ENCODE measurements at regions of chr16 and their contacts with region 1.

Region 1: GRCh38 chr16:17578921-17579874 is 108.4 kb upstream of the XYLT1 start:
- DNase-seq: peak; percentile 80
- H3K4me3 ChIP-seq: no peak overlapping the region
- H3K27ac ChIP-seq: no peak overlapping the region
- H3K27me3 ChIP-seq: no peaks in the 10 kb centered on the region
- CTCF ChIP-seq: peak; percentile 97

Region 2: GRCh38 chr16:16861546-16861945 is 717.7 kb before region 1 on chr16:
- CTCF ChIA-PET with region 1: interaction called, 17 read pairs
- POLR2A ChIA-PET with region 1: no interaction called
- DNase-seq: peak; percentile 0
- H3K4me3 ChIP-seq: no peak overlapping the region
- H3K27ac ChIP-seq: no peak overlapping the region
- H3K27me3 ChIP-seq: no peaks in the 10 kb centered on the region
- CTCF ChIP-seq: peak; percentile 72

Region 3: GRCh38 chr16:17460890-17461289 is 118.3 kb before region 1 on chr16:
- CTCF ChIA-PET with region 1: no interaction called
- POLR2A ChIA-PET with region 1: no interaction called
- DNase-seq: no peak
- H3K4me3 ChIP-seq: no peak overlapping the region
- H3K27ac ChIP-seq: no peak overlapping the region
- H3K27me3 ChIP-seq: no peaks in the 10 kb centered on the region
- CTCF ChIP-seq: no peak

Region 4: DNA sequence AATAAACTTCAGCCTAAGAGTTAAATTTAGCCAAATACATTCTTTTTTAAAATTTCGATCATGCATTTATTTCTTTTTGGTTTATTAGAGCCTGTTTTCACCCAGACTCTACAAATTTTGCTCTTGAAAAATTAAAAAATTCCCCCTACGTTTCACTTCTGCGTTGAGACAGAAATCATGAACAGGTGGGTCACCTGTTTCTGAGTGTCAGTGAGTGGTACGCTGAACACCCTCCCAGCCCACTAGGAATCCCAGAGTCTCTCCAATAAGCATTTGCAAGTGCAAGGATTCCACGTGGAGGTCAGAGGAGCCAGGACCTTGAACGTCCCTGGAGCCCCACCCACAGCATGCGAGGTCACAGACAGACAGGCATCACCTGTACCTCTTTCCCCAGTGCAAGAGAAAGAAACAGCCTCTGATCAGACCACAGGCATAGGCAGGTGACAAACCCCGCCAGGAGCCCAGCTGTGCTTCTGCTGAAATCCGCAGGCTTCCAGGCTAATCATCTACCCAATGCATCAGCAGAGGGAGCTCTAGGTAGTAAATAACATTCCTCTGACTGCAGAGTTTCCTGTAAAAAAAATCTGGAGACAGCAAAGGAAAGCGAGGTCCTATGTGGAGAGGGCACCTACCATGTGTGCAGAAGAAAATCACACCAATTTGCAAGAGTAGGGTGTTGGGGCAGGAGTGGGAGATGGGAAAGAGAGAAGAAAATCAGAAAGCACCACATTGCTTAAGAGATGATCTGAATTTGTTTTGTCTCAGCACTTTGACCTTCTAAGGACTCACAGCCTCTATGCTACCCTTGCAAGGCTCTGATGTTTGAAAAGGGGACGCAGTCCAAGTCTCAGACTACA is 102.6 kb before region 1 on chr16:
- CTCF ChIA-PET with region 1: interaction called, 124 read pairs
- POLR2A ChIA-PET with region 1: interaction called, 4 read pairs
- DNase-seq: peak; percentile 51
- H3K4me3 ChIP-seq: no peak overlapping the region
- H3K27ac ChIP-seq: no peak overlapping the region
- H3K27me3 ChIP-seq: no peaks in the 10 kb centered on the region
- CTCF ChIP-seq: peak; percentile 74

Region 5: GRCh38 chr16:17497648-17498047 is 81.5 kb before region 1 on chr16:
- CTCF ChIA-PET with region 1: interaction called, 13 read pairs
- POLR2A ChIA-PET with region 1: no interaction called
- DNase-seq: no peak
- H3K4me3 ChIP-seq: no peak overlapping the region
- H3K27ac ChIP-seq: no peak overlapping the region
- H3K27me3 ChIP-seq: no peaks in the 10 kb centered on the region
- CTCF ChIP-seq: no peak

Region 6: GRCh38 chr16:17529982-17530765 is 49.0 kb before region 1 on chr16:
- CTCF ChIA-PET with region 1: interaction called, 13 read pairs
- POLR2A ChIA-PET with region 1: no interaction called
- DNase-seq: no peak
- H3K4me3 ChIP-seq: no peak overlapping the region
- H3K27ac ChIP-seq: no peak overlapping the region
- H3K27me3 ChIP-seq: peaks cover 2% of the 10 kb centered on the region
- CTCF ChIP-seq: no peak

Region 7: GRCh38 chr16:17556276-17557052 is 22.7 kb before region 1 on chr16:
- CTCF ChIA-PET with region 1: interaction called, 53 read pairs
- POLR2A ChIA-PET with region 1: interaction called, 3 read pairs
- DNase-seq: no peak
- H3K4me3 ChIP-seq: no peak overlapping the region
- H3K27ac ChIP-seq: no peak overlapping the region
- H3K27me3 ChIP-seq: peaks cover 2% of the 10 kb centered on the region
- CTCF ChIP-seq: peak; percentile 84

Region 8: DNA sequence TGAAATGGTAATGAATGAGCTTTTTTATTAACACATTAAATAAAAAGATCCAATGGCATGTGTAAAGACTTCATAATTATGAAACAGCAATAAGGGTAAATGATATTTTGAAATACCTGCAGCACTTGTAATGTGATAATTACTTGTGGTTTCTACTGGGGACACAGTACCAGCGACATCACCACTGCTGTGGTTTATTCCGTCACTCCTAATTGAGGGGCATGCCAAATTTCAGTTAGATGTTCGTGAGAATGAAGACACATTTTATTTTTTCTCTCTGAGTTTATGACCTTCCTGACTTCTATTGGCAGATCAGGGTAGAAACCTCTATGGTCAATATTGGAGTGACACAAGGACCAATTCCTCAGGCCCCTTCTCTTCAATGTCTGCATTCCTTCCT is 23.5 kb after region 1 on chr16:
- CTCF ChIA-PET with region 1: interaction called, 16 read pairs
- POLR2A ChIA-PET with region 1: no interaction called
- DNase-seq: no peak
- H3K4me3 ChIP-seq: no peak overlapping the region
- H3K27ac ChIP-seq: no peak overlapping the region
- H3K27me3 ChIP-seq: no peaks in the 10 kb centered on the region
- CTCF ChIP-seq: no peak

Region 9: GRCh38 chr16:17683281-17683680 is 104.1 kb after region 1 on chr16:
- CTCF ChIA-PET with region 1: no interaction called
- POLR2A ChIA-PET with region 1: no interaction called
- DNase-seq: no peak
- H3K4me3 ChIP-seq: no peak overlapping the region
- H3K27ac ChIP-seq: no peak overlapping the region
- H3K27me3 ChIP-seq: no peaks in the 10 kb centered on the region
- CTCF ChIP-seq: no peak

Measured in AG04450 (cell line).